Posterior cingulate gyrus (tissue), 11 donors: ENCODE measurements at regions of chr10 and their contacts with region 1.

Region 1: GRCh38 chr10:100433253-100434240 is 29.3 kb upstream of the WNT8B start:
- DNase-seq: peak; percentile 80 to 98 (median 94)

Region 2: DNA sequence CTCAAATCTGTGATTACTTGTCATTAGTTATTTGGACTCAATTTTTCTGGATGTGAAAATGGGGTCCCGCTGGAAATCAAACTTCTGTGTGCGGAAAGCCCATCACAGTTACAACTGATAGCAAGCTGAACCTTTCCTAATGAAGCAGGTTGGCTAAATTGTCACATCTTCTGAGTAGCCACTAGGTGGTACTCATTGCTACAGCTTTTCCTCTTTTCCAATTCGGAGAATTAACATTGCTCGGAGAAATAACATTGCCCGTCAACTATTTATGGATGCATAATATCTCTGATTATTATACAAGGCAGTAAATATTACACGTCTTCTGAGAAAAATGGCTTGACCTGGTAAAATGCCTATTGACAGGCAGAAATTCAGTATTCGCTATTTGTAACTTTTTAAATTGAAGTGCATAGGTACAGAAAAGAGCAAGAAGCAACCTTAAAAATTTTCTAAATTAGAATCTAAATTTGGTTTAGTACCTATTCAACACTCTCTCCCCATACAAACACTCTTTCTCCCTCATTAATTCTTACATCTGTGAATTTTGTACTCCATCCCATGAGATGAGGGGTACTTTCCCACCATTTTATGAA is 129.7 kb before region 1 on chr10:
- intact Hi-C with region 1: loop called (anchors 1 kb)
- DNase-seq: no peak

Region 3: GRCh38 chr10:100338434-100339036 is 95.0 kb before region 1 on chr10:
- intact Hi-C with region 1: loop called (anchors 1 kb)
- DNase-seq: peak; percentile 55 to 96 (median 84)

Region 4: DNA sequence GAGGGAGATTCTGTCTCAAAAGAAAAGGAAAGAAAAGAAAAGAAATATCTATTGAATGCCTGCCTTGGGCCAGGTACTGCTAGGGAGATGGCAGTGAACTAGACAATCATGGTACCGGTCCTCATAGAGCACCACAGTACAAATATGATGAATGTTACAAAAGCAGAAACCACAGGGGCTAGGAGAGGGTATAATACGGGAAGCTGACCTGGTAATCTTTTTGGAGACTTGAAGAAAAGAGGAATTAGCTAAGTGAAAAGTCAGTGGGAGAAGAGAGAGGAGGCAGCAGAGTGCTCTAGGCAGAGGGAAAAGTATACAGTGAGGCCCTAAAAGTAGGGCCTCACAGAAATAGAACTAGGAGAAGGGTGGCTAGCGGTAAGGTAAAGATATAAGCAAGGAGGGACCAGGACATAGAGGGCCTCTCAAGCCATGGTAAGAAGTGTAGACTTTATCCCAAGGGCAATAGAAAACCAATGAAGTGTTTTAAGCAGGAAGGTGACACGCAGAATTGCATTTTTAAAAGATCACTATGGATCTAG is 13.6 kb before region 1 on chr10:
- intact Hi-C with region 1: no loop called
- DNase-seq: no peak

Region 5: GRCh38 chr10:100518761-100519241 is 85.3 kb after region 1 on chr10:
- intact Hi-C with region 1: loop called (anchors 5 kb)
- DNase-seq: peak in 5 of 10 donors; percentile 50 to 69 (median 62)